ENCODE measurements at regions of chr14 and their contacts with region 1.

Region 1: DNA sequence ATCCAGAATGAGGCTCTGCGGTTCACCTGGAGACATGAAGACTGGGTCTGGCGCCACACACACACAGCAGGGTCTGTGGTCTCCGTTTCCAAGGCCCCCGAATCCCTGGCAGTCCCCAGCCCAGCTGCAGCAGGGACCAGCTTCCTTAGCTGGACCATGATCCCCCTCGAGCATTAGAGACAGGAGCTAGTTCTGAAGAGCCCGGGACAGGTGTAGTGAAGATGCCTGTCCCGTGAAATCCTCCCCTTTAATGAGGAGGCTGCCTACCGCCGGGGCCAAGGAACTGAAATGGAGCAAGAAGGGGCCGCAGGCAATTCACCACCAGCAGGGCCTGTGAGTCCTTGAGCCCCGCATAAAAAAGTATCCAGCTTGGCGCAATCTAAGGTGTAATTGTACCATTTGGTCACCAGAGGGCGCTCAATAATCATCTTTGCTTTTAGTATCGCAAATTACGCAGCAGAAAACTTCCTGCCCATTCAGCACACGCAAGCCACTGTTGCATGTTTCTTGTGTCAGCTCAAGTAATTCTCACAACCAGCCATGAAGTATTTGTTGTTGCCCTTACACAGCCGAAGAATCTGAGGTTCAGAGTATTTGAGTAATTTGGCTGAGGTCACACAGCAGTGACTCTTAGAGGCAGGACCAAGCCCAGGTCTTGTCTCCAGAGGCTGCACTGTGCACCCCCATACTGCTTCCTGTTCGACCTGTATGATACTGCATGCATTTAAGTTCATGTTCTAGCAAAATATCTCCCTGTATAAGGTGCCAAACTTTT is 54.3 kb upstream of the PPP2R5C start:
- DNase-seq: peak; percentile 81
- ATAC-seq: peak; percentile 62
- H3K4me3 ChIP-seq: peak overlapping the region; percentile 41 to 67 (median 48)
- H3K27ac ChIP-seq: peak overlapping the region; percentile 48
- H3K4me1 ChIP-seq: peaks cover 53% of the 10 kb centered on the region
- H3K27me3 ChIP-seq: no peaks in the 10 kb centered on the region
- CTCF ChIP-seq: peak; percentile 89
- EP300 ChIP-seq: no peak
- POLR2A ChIP-seq: no peak
- RAD21 ChIP-seq: peak; percentile 87

Region 2: GRCh38 chr14:101761032-101761880 is 54.0 kb after region 1 on chr14 and contains the start of gene PPP2R5C:
- CTCF ChIA-PET with region 1: no interaction called
- POLR2A ChIA-PET with region 1: interaction called, 7 read pairs
- in situ Hi-C with region 1: loop called (anchors 5 kb)
- intact Hi-C with region 1: no loop called
- DNase-seq: peak; percentile 76
- ATAC-seq: peak; percentile 90
- H3K4me3 ChIP-seq: peak within 1 kb of the TSS; percentile 83 to 97 (median 88)
- H3K27ac ChIP-seq: peak within 1 kb of the TSS; percentile 97
- H3K4me1 ChIP-seq: peaks cover 43% of the 10 kb centered on the region
- H3K27me3 ChIP-seq: peaks cover 2 to 26% of the 10 kb centered on the region in 2 experiments; a peak in 2 of 5 replicates
- CTCF ChIP-seq: no peak
- EP300 ChIP-seq: no peak
- POLR2A ChIP-seq: peak; percentile 74 to 87
- RAD21 ChIP-seq: peak; percentile 38; the same call in 1 of the 2 replicates
- total RNA-seq, gene PPP2R5C: 74.3 and 94.8 TPM in 2 replicates

Region 3: GRCh38 chr14:101774006-101774795 is 66.9 kb after region 1 on chr14:
- CTCF ChIA-PET with region 1: interaction called, 12 read pairs
- POLR2A ChIA-PET with region 1: interaction called, 4 read pairs
- in situ Hi-C with region 1: no loop called
- intact Hi-C with region 1: loop called (anchors 1 kb)
- DNase-seq: no peak
- ATAC-seq: no peak
- H3K4me3 ChIP-seq: no peak overlapping the region
- H3K27ac ChIP-seq: no peak overlapping the region
- H3K4me1 ChIP-seq: peaks cover 15% of the 10 kb centered on the region
- H3K27me3 ChIP-seq: no peaks in the 10 kb centered on the region
- CTCF ChIP-seq: no peak
- EP300 ChIP-seq: no peak
- POLR2A ChIP-seq: no peak
- RAD21 ChIP-seq: no peak

Region 4: GRCh38 chr14:101947906-101948665 is 240.8 kb after region 1 on chr14:
- CTCF ChIA-PET with region 1: no interaction called
- POLR2A ChIA-PET with region 1: interaction called, 9 read pairs
- in situ Hi-C with region 1: no loop called
- intact Hi-C with region 1: loop called (anchors 5 kb)
- DNase-seq: peak; percentile 99
- ATAC-seq: peak; percentile 97
- H3K4me3 ChIP-seq: peak overlapping the region; percentile 88 to 96 (median 91)
- H3K27ac ChIP-seq: peak overlapping the region; percentile 91
- H3K4me1 ChIP-seq: peaks cover 20% of the 10 kb centered on the region
- H3K27me3 ChIP-seq: no peaks in the 10 kb centered on the region; a peak in 1 of 5 replicates
- CTCF ChIP-seq: 0 out of 2 replicates have a peak, but pooled peaks have one; percentile 2
- EP300 ChIP-seq: no peak; a peak in 1 of 4 replicates
- POLR2A ChIP-seq: peak; percentile 89 to 96
- RAD21 ChIP-seq: no peak; the same call in 1 of the 2 replicates

Region 5: DNA sequence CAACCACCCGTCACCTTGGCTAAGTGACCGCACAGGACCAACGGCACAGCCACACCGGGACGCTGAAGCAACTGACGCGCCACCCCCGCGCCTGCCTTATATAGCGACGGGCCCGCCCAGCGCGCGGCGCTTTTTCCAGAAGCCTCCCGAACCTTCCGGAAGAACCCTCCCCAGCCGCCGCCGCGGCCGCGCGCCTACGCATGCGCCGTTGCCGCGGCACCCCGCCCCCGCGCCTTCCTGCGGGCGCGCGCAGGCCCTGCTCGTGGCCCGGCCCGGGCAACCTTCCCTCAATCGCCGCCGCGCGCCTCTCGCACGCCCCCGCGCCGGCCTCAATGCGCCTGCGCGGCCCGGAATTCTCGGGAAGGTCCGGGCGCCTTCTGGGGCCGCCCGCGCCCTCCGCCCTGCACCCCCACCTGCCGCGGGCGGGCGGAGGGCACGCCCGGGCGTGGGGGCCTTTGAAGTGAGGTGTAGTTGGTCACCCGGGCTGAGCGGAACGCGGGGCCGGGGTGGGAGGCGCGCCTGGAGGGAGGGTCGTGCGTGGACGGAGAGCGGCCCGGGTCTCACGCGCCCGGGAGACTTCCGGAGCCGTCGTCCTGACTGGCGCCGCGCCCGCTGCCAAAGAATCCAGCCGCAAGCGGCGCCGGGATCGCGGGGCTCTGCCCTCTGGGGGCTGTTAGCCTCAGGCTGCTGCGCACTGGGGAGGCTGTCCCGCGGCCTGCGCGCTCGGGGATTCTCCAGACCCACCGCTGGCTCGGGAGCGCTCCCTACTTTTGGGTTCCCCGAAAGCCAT is 379.9 kb after region 1 on chr14 and contains the start of gene HSP90AA1:
- CTCF ChIA-PET with region 1: no interaction called
- POLR2A ChIA-PET with region 1: no interaction called
- in situ Hi-C with region 1: loop called (anchors 25 kb)
- intact Hi-C with region 1: no loop called
- DNase-seq: peak; percentile 83
- ATAC-seq: peak; percentile 86
- H3K4me3 ChIP-seq: peak within 1 kb of the TSS; percentile 84 to 91 (median 90)
- H3K27ac ChIP-seq: peak within 1 kb of the TSS; percentile 94
- H3K4me1 ChIP-seq: peaks cover 47% of the 10 kb centered on the region
- H3K27me3 ChIP-seq: no peaks in the 10 kb centered on the region; a peak in 1 of 5 replicates
- CTCF ChIP-seq: peak; percentile 41
- EP300 ChIP-seq: peak in 1 of 2 experiments; percentile 95; a peak in 2 of 4 replicates
- POLR2A ChIP-seq: peak; percentile 97 to 99
- RAD21 ChIP-seq: peak; percentile 45; the same call in 1 of the 2 replicates
- total RNA-seq, gene HSP90AA1: 636 and 1,509 TPM in 2 replicates

Region 6: GRCh38 chr14:102096214-102097114 is 389.2 kb after region 1 on chr14:
- CTCF ChIA-PET with region 1: no interaction called
- POLR2A ChIA-PET with region 1: no interaction called
- in situ Hi-C with region 1: loop called (anchors 25 kb)
- intact Hi-C with region 1: loop called (anchors 5 kb)
- DNase-seq: peak; percentile 63
- ATAC-seq: peak; percentile 83
- H3K4me3 ChIP-seq: peak overlapping the region in 1 of 3 experiments; percentile 20; a peak in 1 of 6 replicates
- H3K27ac ChIP-seq: no peak overlapping the region
- H3K4me1 ChIP-seq: peaks cover 37% of the 10 kb centered on the region
- H3K27me3 ChIP-seq: peaks cover 2 to 25% of the 10 kb centered on the region in 2 experiments; a peak in 3 of 5 replicates
- CTCF ChIP-seq: peak; percentile 88
- EP300 ChIP-seq: no peak
- POLR2A ChIP-seq: no peak
- RAD21 ChIP-seq: peak; percentile 75

Region 7: GRCh38 chr14:102351026-102351425 is 643.8 kb after region 1 on chr14:
- CTCF ChIA-PET with region 1: no interaction called
- POLR2A ChIA-PET with region 1: no interaction called
- in situ Hi-C with region 1: no loop called
- intact Hi-C with region 1: no loop called
- DNase-seq: no peak
- ATAC-seq: no peak
- H3K4me3 ChIP-seq: no peak overlapping the region
- H3K27ac ChIP-seq: no peak overlapping the region
- H3K4me1 ChIP-seq: no peaks in the 10 kb centered on the region
- H3K27me3 ChIP-seq: no peaks in the 10 kb centered on the region
- CTCF ChIP-seq: no peak
- EP300 ChIP-seq: no peak
- POLR2A ChIP-seq: no peak
- RAD21 ChIP-seq: no peak